Colonic mucosa (tissue), 4 donors: ENCODE measurements at regions of chr10 and their contacts with region 1.

Region 1: GRCh38 chr10:37976091-37976879 is at the start of gene ZNF25:
- DNase-seq: peak; percentile 99
- H3K4me3 ChIP-seq: peak within 1 kb of the TSS; percentile 84
- H3K27ac ChIP-seq: peak within 1 kb of the TSS; percentile 97
- H3K4me1 ChIP-seq: no peaks in the 10 kb centered on the region
- H3K27me3 ChIP-seq: no peaks in the 10 kb centered on the region
- CTCF ChIP-seq: peak; percentile 89
- total RNA-seq, gene ZNF25: 1.5 to 4.2 TPM

Region 2: GRCh38 chr10:37794305-37794976 is 181.8 kb before region 1 on chr10:
- intact Hi-C with region 1: no loop called
- DNase-seq: no peak
- H3K4me3 ChIP-seq: no peak overlapping the region
- H3K27ac ChIP-seq: no peak overlapping the region
- H3K4me1 ChIP-seq: no peaks in the 10 kb centered on the region
- H3K27me3 ChIP-seq: no peaks in the 10 kb centered on the region
- CTCF ChIP-seq: no peak

Region 3: DNA sequence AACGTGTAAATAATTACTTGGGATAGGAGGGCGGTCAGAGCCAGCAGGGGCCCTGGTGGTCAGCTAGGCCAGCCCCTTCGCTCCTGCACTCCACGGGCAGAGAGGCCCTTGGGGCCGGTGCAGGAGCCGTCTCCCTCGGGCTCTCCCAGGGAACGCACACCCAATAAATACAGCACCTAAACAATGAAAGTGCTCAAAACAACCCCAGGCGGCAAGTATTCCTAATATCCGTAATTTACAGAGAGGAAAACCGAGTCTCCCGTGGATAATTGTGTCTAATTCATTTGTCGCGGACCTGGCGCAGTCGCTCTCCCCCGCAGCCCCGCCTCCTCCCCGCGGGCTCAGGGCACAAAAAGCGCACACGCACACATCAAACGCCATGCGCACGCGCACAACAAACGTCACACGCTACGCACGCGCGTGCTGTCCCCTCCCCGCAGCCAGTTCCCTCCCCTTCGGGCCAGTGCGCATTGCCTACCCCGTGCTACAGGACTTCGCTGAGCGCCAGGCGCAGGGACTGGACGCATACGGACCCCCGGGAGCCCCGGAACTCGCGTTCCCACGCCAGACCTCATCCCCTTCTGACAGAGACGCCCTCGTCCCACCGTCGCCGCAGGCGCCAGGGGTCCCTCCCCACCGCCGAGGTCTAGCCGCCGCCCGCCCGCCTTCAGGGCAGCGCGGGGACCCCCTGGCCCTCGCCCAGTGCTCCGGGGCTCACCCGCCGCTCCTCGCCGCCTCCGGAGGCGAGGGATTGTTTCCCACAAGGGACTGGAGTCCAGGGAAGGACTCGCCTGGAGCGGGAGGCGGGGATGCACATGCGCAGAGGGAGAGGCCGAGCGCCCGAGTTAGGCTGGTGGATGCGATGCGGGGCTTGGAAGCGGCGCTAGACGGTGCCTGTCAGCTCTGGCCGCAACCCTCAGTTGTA is 118.7 kb before region 1 on chr10 and contains the start of gene ZNF248:
- intact Hi-C with region 1: loop called (anchors 5 kb)
- DNase-seq: peak; percentile 96
- H3K4me3 ChIP-seq: peak within 1 kb of the TSS; percentile 94
- H3K27ac ChIP-seq: peak within 1 kb of the TSS; percentile 100
- H3K4me1 ChIP-seq: peaks cover 5% of the 10 kb centered on the region
- H3K27me3 ChIP-seq: no peaks in the 10 kb centered on the region
- CTCF ChIP-seq: no peak
- total RNA-seq, gene ZNF248: 7.5 to 8.2 TPM

Region 4: GRCh38 chr10:38010119-38010903 is 34.0 kb after region 1 on chr10 and contains the start of gene ZNF33A:
- intact Hi-C with region 1: loop called (anchors 5 kb)
- DNase-seq: peak; percentile 94
- H3K4me3 ChIP-seq: peak within 1 kb of the TSS; percentile 73
- H3K27ac ChIP-seq: peak within 1 kb of the TSS; percentile 99
- H3K4me1 ChIP-seq: no peaks in the 10 kb centered on the region
- H3K27me3 ChIP-seq: no peaks in the 10 kb centered on the region
- CTCF ChIP-seq: no peak
- total RNA-seq, gene ZNF33A: 30.4 to 32.8 TPM